Activated T-helper 2 cell treated with anti-CD3 and anti-CD28 coated beads, Interferon-gamma antibody, Interleukin-2, Interleukin-4, amounts not matched to agents 10 μg/mL and 5 μg/mL and 100 μg/mL, durations not matched to agents 14 hours and 24 hours and 36 hours (primary cell): ENCODE measurements at regions of chr6 and their contacts with region 1.

Region 1: DNA sequence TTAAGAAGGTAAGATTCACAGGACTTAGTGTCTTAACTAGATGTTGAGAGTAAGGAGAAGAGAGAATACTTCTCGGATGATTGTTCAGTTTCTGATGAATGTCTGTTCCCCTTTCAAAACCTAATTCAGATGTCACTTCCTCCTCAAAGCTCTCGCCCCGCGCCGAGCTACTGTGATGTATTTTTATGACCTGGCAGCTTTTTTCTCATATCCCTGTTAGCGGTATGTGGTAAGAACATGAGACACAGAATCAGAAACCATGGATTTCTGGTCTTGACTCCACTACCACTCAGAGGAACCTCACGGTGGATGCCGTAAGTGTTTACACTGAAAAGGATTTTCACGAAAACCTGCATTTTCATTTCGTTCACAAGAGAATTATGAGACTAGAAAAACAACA is 48.4 kb downstream of the CEP43 start:
- DNase-seq: no peak
- H3K4me3 Mint-ChIP-seq: peak overlapping the region; percentile 9
- H3K27ac Mint-ChIP-seq: peak overlapping the region; percentile 50
- H3K4me1 Mint-ChIP-seq: peaks cover 27% of the 10 kb centered on the region
- H3K27me3 Mint-ChIP-seq: no peaks in the 10 kb centered on the region

Region 2: GRCh38 chr6:166942393-166943168 is 105.0 kb before region 1 on chr6:
- intact Hi-C with region 1: loop called (anchors 2 kb)
- DNase-seq: peak; percentile 61
- H3K4me3 Mint-ChIP-seq: peak overlapping the region; percentile 56
- H3K27ac Mint-ChIP-seq: peak overlapping the region; percentile 94
- H3K4me1 Mint-ChIP-seq: peaks cover 29% of the 10 kb centered on the region
- H3K27me3 Mint-ChIP-seq: no peaks in the 10 kb centered on the region

Region 3: GRCh38 chr6:167031082-167031709 is 16.4 kb before region 1 on chr6:
- intact Hi-C with region 1: no loop called
- DNase-seq: no peak
- H3K4me3 Mint-ChIP-seq: no peak overlapping the region
- H3K27ac Mint-ChIP-seq: no peak overlapping the region
- H3K4me1 Mint-ChIP-seq: peaks cover 6% of the 10 kb centered on the region
- H3K27me3 Mint-ChIP-seq: no peaks in the 10 kb centered on the region

Region 4: GRCh38 chr6:167079853-167080297 is 32.3 kb after region 1 on chr6:
- intact Hi-C with region 1: loop called (anchors 1 kb)
- DNase-seq: no peak
- H3K4me3 Mint-ChIP-seq: no peak overlapping the region
- H3K27ac Mint-ChIP-seq: no peak overlapping the region
- H3K4me1 Mint-ChIP-seq: peaks cover 24% of the 10 kb centered on the region
- H3K27me3 Mint-ChIP-seq: peaks cover 33% of the 10 kb centered on the region

Region 5: GRCh38 chr6:167093922-167094432 is 46.4 kb after region 1 on chr6:
- intact Hi-C with region 1: loop called (anchors 5 kb)
- DNase-seq: no peak
- H3K4me3 Mint-ChIP-seq: no peak overlapping the region
- H3K27ac Mint-ChIP-seq: no peak overlapping the region
- H3K4me1 Mint-ChIP-seq: peaks cover 42% of the 10 kb centered on the region
- H3K27me3 Mint-ChIP-seq: peaks cover 53% of the 10 kb centered on the region

Region 6: DNA sequence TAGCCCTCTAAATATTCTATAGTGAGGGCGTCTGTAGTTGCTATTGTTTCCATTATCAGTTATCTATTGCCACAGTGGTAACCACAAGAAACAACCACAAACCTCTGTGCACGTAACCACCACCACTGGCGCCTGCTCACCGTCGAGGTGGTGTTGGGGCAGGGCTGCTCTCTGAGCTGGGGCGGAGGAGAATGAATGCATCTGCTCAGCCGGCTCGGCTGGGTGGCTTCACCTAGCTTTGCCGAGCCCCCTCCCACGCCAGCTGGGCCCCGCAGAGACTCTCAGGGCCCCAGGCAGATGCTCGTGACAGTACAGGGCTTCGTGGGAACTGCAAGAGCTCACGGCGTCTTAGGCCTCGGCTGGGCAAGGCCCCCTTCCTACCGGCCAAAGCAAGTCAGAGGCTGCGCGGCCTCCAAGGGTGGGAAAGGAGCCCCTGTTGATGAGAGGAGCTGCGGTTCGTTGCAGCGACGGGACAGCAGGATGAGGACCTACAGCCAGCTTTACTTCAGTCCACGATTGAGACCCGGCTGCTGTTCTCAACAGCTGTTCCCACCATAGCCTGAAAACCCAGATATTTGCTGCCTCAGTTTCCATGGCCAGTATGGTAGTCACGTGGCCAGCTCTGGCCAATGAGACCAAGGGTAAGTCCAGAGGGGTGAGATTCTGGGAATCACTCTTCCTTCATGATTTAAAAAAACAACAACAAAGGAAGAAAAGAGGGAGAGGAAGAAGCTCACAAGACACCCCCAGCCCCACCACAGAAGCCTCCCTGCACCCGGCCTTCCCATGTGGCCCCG is 659.0 kb after region 1 on chr6:
- intact Hi-C with region 1: loop called (anchors 10 kb)
- DNase-seq: peak; percentile 77
- H3K4me3 Mint-ChIP-seq: no peak overlapping the region
- H3K27ac Mint-ChIP-seq: peak overlapping the region; percentile 70
- H3K4me1 Mint-ChIP-seq: peaks cover 27% of the 10 kb centered on the region
- H3K27me3 Mint-ChIP-seq: peaks cover 69% of the 10 kb centered on the region